H1 (cell line): ENCODE measurements at regions of chr17 and their contacts with region 1.

Region 1: GRCh38 chr17:38351412-38352222 is at the start of gene SOCS7:
- DNase-seq: peak; percentile 36 to 95
- H3K4me3 ChIP-seq: peak within 1 kb of the TSS; percentile 67 to 87 (median 74)
- H3K27ac ChIP-seq: peak within 1 kb of the TSS; percentile 9; the same call in 1 of the 2 replicates
- H3K4me1 ChIP-seq: peaks cover 0 to 13% (median 4%) of the 10 kb centered on the region in 4 experiments; a peak in 5 of 7 replicates
- H3K27me3 ChIP-seq: no peaks in the 10 kb centered on the region; a peak in 1 of 7 replicates
- CTCF ChIP-seq: no peak
- EP300 ChIP-seq: no peak
- POLR2A ChIP-seq: no peak; a peak in 1 of 3 replicates
- RAD21 ChIP-seq: no peak
- total RNA-seq, gene SOCS7: 26.9 and 28.2 TPM in 2 replicates

Region 2: DNA sequence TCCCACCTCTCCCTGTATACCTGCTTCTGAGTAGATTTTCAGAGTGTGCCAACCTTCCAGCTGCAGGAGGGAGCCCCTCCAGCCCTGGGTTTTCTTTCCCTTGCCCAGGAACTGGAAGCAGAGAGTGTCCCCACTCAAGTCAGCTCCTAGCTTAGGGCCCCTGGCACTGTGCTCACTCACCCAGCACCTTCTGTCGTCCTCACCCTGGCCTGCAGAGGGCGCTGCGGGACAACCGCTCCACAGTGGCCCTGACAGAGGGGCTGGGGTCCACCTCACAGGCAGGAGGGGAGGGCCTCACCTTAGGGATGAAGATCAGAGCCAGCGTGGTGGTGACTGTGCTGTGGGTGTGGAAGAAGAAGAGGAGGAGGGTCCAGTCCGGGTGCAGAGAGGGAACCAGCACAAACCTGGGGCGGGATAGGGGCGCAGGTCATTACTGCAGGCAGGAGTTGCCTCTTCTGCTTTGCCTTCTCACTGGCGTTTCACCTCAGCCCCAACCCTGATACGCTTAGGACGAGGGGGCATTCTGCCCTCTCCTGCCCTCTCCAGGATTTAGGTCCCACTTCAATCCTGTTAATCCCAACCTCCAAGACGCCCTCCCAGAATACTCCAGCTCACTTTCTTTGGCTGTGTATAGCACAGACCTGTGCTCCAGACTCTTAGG is 17.9 kb before region 1 on chr17:
- CTCF ChIA-PET with region 1: interaction called, 192 read pairs
- POLR2A ChIA-PET with region 1: interaction called, 11 read pairs
- DNase-seq: peak; percentile 54 to 100
- H3K4me3 ChIP-seq: no peak overlapping the region
- H3K27ac ChIP-seq: no peak overlapping the region
- H3K4me1 ChIP-seq: peaks cover 0 to 5% (median 0%) of the 10 kb centered on the region in 4 experiments; a peak in 2 of 7 replicates
- H3K27me3 ChIP-seq: no peaks in the 10 kb centered on the region
- CTCF ChIP-seq: peak; percentile 94 to 99 (median 98)
- EP300 ChIP-seq: no peak
- POLR2A ChIP-seq: no peak
- RAD21 ChIP-seq: peak; percentile 87 to 93

Region 3: GRCh38 chr17:38369124-38369886 is 17.7 kb after region 1 on chr17:
- CTCF ChIA-PET with region 1: interaction called, 28 read pairs
- POLR2A ChIA-PET with region 1: interaction called, 4 read pairs
- DNase-seq: no peak
- H3K4me3 ChIP-seq: no peak overlapping the region
- H3K27ac ChIP-seq: no peak overlapping the region
- H3K4me1 ChIP-seq: no peaks in the 10 kb centered on the region
- H3K27me3 ChIP-seq: no peaks in the 10 kb centered on the region
- CTCF ChIP-seq: no peak
- EP300 ChIP-seq: no peak
- POLR2A ChIP-seq: no peak
- RAD21 ChIP-seq: no peak

Region 4: DNA sequence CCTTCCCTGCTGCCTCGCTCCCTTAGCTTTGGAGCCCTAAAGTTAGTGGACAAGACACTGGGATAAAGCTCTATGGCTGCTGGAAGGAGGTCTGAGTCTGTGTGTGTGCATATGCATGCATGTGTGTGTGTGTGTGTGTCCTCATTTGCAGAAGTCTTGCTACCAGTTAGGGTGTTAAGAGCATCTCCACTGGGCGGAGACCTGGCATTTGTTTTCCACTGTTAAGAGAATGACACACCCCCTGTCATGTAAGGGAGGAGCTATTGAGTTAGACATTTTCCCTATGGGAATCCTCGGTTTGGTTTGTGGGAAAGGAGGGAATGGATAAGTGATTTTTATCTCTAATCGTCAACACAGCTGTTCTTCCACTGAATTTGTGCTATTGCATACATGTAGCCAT is 51.9 kb after region 1 on chr17:
- CTCF ChIA-PET with region 1: interaction called, 400 read pairs
- POLR2A ChIA-PET with region 1: interaction called, 16 read pairs
- DNase-seq: no peak
- H3K4me3 ChIP-seq: peak overlapping the region in 1 of 4 experiments; percentile 23; a peak in 1 of 8 replicates
- H3K27ac ChIP-seq: no peak overlapping the region; the same call in 1 of the 2 replicates
- H3K4me1 ChIP-seq: peaks cover 13 to 27% (median 19%) of the 10 kb centered on the region in 4 experiments
- H3K27me3 ChIP-seq: no peaks in the 10 kb centered on the region
- CTCF ChIP-seq: no peak
- EP300 ChIP-seq: no peak
- POLR2A ChIP-seq: no peak
- RAD21 ChIP-seq: no peak

Region 5: GRCh38 chr17:38421171-38421841 is 69.7 kb after region 1 on chr17:
- CTCF ChIA-PET with region 1: interaction called, 400 read pairs
- POLR2A ChIA-PET with region 1: interaction called, 11 read pairs
- DNase-seq: no peak
- H3K4me3 ChIP-seq: peak overlapping the region in 1 of 4 experiments; percentile 4; a peak in 2 of 8 replicates
- H3K27ac ChIP-seq: no peak overlapping the region
- H3K4me1 ChIP-seq: peaks cover 21 to 64% (median 52%) of the 10 kb centered on the region in 4 experiments
- H3K27me3 ChIP-seq: peaks cover 0 to 19% (median 7%) of the 10 kb centered on the region in 4 experiments; a peak in 4 of 7 replicates
- CTCF ChIP-seq: no peak
- EP300 ChIP-seq: no peak
- POLR2A ChIP-seq: no peak
- RAD21 ChIP-seq: no peak

Region 6: DNA sequence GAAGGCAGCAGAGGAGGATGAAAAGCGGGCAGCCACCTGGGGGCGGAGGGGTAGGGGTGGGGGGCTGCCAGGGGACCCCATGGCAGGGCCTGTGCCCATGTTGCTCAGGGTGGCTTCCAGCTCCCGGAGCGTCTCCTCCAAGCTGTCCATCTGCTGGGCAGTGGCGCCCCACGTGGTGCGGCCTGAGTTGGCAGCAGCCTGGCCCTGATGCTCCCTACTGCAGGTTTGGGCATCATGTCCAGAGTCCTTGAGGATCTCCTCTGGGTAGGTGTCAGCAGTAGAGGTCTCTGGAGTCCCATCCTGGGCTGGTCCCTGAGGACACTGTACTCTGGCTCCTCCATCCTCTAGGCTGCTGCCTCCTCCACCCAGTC is 193.2 kb after region 1 on chr17:
- CTCF ChIA-PET with region 1: no interaction called
- POLR2A ChIA-PET with region 1: no interaction called
- DNase-seq: no peak
- H3K4me3 ChIP-seq: no peak overlapping the region
- H3K27ac ChIP-seq: no peak overlapping the region
- H3K4me1 ChIP-seq: peaks cover 0 to 7% (median 0%) of the 10 kb centered on the region in 4 experiments; a peak in 2 of 7 replicates
- H3K27me3 ChIP-seq: no peaks in the 10 kb centered on the region; a peak in 1 of 7 replicates
- CTCF ChIP-seq: peak; percentile 50 to 57 (median 55)
- EP300 ChIP-seq: no peak
- POLR2A ChIP-seq: no peak
- RAD21 ChIP-seq: peak; percentile 41 to 60